Colonic mucosa (tissue), 4 donors: ENCODE measurements at regions of chrX and their contacts with region 1.

Region 1: DNA sequence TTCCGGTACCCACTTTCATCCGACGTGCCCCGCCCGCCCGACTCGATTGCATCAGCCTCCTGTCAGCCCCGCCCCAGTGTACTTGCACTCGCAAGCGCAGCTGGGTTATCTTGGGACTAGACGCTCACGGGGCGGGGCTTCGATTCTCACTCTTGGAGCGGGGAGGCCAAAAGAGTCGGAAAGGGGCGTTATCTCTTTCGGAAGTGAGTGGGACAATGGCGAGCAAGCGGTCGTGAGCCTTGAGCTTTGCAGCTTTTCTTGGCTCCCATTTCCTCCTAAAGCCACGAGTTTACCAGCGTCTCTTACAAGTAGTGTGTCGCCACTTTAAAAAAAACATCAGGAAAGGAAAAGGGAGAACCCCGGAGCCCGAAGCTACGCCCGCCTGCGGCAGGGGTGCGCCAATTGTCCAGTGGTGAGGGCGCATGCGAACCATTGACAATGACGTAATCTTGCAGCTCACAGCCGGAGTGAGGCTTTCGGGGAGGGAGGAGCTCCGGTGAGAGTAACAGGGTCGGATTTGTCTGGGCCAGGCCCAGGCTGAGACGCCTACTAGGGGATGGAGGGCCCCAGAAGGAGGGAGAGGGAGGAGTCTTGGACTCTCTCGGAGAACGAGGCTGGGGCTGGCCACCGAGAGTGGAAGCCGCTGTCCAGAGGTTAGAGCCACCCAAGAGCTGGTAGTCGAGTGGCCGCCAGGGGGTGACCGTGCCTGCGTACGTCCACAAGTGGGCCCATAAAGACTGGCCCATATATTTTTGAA is 109.5 kb downstream of the GNL3L start:
- DNase-seq: peak; percentile 93
- H3K4me3 ChIP-seq: peak overlapping the region; percentile 35
- H3K27ac ChIP-seq: peak overlapping the region; percentile 84
- H3K4me1 ChIP-seq: no peaks in the 10 kb centered on the region
- H3K27me3 ChIP-seq: no peaks in the 10 kb centered on the region
- CTCF ChIP-seq: peak; percentile 48

Region 2: DNA sequence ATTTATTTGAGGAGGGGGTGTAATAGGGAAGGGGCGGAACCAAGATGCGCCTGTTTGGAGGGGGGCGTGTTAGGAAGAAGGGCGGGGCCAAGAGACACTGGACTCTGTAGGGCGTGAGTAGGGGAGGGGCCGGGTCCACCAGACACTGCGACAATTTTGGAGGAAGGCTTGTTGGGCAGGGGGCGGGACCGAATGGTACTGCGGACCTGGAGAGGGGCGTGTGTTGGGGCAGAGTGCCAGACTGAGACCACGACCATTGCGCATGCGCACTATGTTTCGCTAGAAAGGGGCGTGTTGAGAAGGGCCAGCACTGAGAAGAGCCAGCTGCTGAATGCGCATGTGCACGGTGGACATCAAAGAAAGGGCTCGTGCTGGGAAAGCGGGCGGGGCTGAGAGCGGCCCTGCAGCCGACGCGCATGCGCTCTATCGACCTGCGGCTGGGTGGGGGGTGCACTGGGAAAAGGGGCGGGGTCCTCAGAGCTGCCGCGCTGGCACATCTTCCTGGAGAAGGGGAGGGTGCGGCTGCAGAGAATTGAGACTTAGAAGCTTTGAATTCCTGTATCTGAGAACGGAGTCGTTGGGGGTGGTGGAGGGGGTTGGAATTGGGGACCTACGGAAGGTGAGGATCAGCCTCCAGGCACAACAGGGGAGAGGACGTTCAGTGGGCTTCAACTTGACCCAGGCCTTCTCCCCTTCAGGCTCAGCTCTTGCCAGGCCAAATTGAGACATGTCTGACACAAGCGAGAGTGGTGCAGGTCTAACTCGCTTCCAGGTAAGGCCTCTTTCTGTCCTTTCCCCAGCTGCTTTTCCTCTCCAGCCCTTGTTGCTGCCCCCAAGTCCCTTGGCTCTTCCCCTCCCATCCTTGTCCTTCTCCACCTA is 169.3 kb after region 1 on chrX:
- intact Hi-C with region 1: loop called (anchors 10 kb)
- DNase-seq: peak; percentile 90
- H3K4me3 ChIP-seq: peak overlapping the region; percentile 52
- H3K27ac ChIP-seq: peak overlapping the region; percentile 79
- H3K4me1 ChIP-seq: no peaks in the 10 kb centered on the region
- H3K27me3 ChIP-seq: no peaks in the 10 kb centered on the region
- CTCF ChIP-seq: no peak